Caco-2 (cell line): ENCODE measurements at regions of chr13 and their contacts with region 1.

Region 1: GRCh38 chr13:89695343-89696257 is 1651.9 kb upstream of the MIR17HG start:
- DNase-seq: peak; percentile 45 to 71
- H3K4me3 ChIP-seq: no peak overlapping the region
- H3K4me3 Mint-ChIP-seq: no peak overlapping the region
- H3K27ac Mint-ChIP-seq: no peak overlapping the region
- H3K4me1 ChIP-seq: no peaks in the 10 kb centered on the region
- H3K4me1 Mint-ChIP-seq: no peaks in the 10 kb centered on the region
- H3K27me3 ChIP-seq: no peaks in the 10 kb centered on the region
- H3K27me3 Mint-ChIP-seq: no peaks in the 10 kb centered on the region
- CTCF ChIP-seq: peak; percentile 81 to 84

Region 2: DNA sequence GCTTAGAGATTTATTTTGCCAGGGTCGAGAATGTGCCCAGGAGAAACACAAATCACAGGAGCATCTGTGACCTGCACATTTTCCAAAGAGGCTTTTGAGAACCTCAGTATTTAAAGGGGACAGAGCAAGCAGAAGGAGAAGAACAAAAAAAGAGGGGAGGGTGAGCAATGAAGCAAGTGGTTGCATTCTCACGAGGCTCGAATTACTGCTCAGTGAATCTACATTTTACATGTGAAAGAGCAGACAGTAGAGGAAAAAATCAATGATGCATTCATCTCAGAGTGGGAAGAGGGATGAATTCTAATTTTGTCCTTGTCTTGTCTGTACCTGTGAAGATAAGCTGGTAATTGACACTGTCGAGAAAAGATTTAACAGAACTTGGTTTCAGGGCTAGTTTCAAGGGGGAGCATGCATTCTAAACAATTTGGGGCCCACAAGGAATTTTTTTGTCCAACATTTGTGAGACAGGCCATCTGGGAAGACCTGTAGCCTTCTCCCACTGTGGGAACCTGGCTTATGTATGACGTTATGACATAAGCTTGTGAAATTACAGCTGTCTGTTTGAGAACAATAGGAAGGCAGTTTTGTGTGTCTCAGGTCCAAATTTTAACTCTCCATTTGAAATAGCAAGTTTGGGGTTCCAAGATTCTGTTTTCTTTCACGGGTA is 1169.3 kb before region 1 on chr13:
- CTCF ChIA-PET with region 1: no interaction called
- POLR2A ChIA-PET with region 1: no interaction called
- intact Hi-C with region 1: loop called (anchors 5 kb)
- DNase-seq: no peak
- H3K4me3 ChIP-seq: no peak overlapping the region
- H3K4me3 Mint-ChIP-seq: no peak overlapping the region
- H3K27ac Mint-ChIP-seq: no peak overlapping the region
- H3K4me1 ChIP-seq: no peaks in the 10 kb centered on the region
- H3K4me1 Mint-ChIP-seq: no peaks in the 10 kb centered on the region
- H3K27me3 ChIP-seq: no peaks in the 10 kb centered on the region
- H3K27me3 Mint-ChIP-seq: no peaks in the 10 kb centered on the region
- CTCF ChIP-seq: no peak

Region 3: GRCh38 chr13:89066868-89067466 is 628.6 kb before region 1 on chr13:
- CTCF ChIA-PET with region 1: no interaction called
- POLR2A ChIA-PET with region 1: no interaction called
- intact Hi-C with region 1: loop called (anchors 1 kb)
- DNase-seq: peak; percentile 32 to 61
- H3K4me3 ChIP-seq: no peak overlapping the region
- H3K4me3 Mint-ChIP-seq: no peak overlapping the region
- H3K27ac Mint-ChIP-seq: no peak overlapping the region
- H3K4me1 ChIP-seq: no peaks in the 10 kb centered on the region
- H3K4me1 Mint-ChIP-seq: no peaks in the 10 kb centered on the region
- H3K27me3 ChIP-seq: no peaks in the 10 kb centered on the region
- H3K27me3 Mint-ChIP-seq: no peaks in the 10 kb centered on the region
- CTCF ChIP-seq: peak; percentile 45 to 60

Region 4: GRCh38 chr13:89361909-89362308 is 333.7 kb before region 1 on chr13:
- CTCF ChIA-PET with region 1: interaction called, 12 read pairs
- POLR2A ChIA-PET with region 1: no interaction called
- intact Hi-C with region 1: loop called (anchors 1 kb)
- DNase-seq: peak in 1 of 2 experiments; percentile 8
- H3K4me3 ChIP-seq: no peak overlapping the region
- H3K4me3 Mint-ChIP-seq: no peak overlapping the region
- H3K27ac Mint-ChIP-seq: no peak overlapping the region
- H3K4me1 ChIP-seq: no peaks in the 10 kb centered on the region
- H3K4me1 Mint-ChIP-seq: no peaks in the 10 kb centered on the region
- H3K27me3 ChIP-seq: no peaks in the 10 kb centered on the region; the same call in 1 of the 2 replicates
- H3K27me3 Mint-ChIP-seq: no peaks in the 10 kb centered on the region
- CTCF ChIP-seq: peak in 1 of 2 experiments; percentile 28

Region 5: DNA sequence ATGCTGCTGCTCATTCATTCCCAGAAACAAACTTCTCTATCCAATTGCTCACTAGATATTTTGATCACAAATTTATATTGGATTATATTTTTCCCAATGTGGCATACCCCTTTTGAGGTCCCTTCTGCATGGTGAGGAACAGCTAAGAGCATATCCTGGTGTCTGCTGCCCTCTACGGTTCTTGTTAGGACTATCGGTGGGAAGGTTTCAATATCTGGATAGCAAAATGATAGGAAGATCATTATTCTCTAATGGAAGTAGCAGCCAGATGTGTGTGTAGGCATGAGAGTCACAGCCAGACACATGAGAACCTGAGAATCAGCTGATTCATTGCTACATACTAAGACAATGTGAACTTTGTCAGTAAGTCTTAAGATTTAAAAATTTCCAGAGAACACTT is 229.5 kb after region 1 on chr13:
- CTCF ChIA-PET with region 1: interaction called, 4 read pairs
- POLR2A ChIA-PET with region 1: no interaction called
- intact Hi-C with region 1: loop called (anchors 1 kb)
- DNase-seq: peak in 1 of 2 experiments; percentile 43
- H3K4me3 ChIP-seq: no peak overlapping the region
- H3K4me3 Mint-ChIP-seq: no peak overlapping the region
- H3K27ac Mint-ChIP-seq: no peak overlapping the region
- H3K4me1 ChIP-seq: peaks cover under 1% of the 10 kb centered on the region; the same call in 1 of the 2 replicates
- H3K4me1 Mint-ChIP-seq: no peaks in the 10 kb centered on the region
- H3K27me3 ChIP-seq: no peaks in the 10 kb centered on the region
- H3K27me3 Mint-ChIP-seq: no peaks in the 10 kb centered on the region
- CTCF ChIP-seq: peak; percentile 48 to 71